ENCODE measurements at regions of chr11 and their contacts with region 1.

Region 1: DNA sequence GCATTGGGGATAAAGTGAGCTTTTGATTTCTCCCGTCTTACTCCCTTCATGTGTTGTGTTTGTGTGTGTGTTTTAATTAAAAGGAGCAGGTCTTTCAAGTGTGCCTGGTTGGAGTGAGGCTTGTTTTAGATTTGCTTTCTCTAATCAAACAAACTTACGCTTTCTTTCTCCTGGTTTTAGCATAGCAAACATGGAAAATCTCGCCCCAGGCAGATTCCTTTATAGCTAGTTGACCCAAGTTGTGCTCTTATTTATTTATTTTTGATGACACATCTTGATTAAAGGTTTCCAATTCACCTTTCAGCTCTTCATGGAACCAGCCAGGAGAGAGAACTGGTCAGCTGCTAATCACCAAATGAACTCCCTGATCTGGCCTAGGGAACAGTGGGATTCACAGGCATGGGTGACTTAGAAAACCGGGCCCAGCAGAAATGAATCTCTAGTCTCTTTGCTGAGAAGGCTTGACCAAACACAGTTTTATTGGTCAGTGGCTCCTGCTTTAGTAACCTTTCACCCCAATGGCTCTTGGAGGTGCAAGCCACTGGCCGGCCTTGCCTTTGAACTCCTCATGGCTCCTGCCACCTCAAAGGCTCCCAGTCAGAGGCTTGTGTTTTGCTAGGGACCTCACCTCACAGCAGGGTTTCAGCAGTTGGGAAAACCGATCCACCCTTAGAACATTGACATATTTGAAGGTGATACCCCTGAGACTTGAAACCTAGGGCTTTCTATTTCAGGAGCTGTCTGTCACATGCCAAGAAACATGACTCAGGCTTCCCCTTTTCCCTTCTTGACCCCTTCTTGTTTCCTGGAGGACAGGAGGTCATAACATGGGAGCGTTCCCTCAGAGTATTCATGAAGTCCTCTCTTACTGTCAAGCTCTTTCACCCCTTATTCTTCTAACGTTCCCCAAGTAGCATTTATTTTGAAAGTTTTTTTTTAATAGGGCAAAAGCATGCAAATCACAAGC is 48.7 kb downstream of the EXT2 start:
- DNase-seq: no peak
- ATAC-seq: peak in 1 of 8 donors; percentile 36
- H3K4me3 ChIP-seq: no peak overlapping the region
- H3K27ac ChIP-seq: peak overlapping the region in 1 of 10 donors; percentile 36
- H3K4me1 ChIP-seq: peaks cover 6 to 89% (median 50%) of the 10 kb centered on the region in 9 donors
- H3K27me3 ChIP-seq: no peaks in the 10 kb centered on the region
- CTCF ChIP-seq: no peak

Region 2: GRCh38 chr11:44229098-44229497 is 84.9 kb after region 1 on chr11:
- intact Hi-C with region 1: loop called in 1 of 10 experiments (anchors 5 kb)
- DNase-seq: no peak
- ATAC-seq: no peak
- H3K4me3 ChIP-seq: no peak overlapping the region
- H3K27ac ChIP-seq: no peak overlapping the region
- H3K4me1 ChIP-seq: peaks cover 0 to 27% (median 8%) of the 10 kb centered on the region in 9 donors
- H3K27me3 ChIP-seq: no peaks in the 10 kb centered on the region
- CTCF ChIP-seq: no peak